MCF 10A (cell line): ENCODE measurements at regions of chr7 and their contacts with region 1.

Region 1: GRCh38 chr7:7221602-7222038 is 39.3 kb downstream of the C1GALT1 start:
- DNase-seq: peak; percentile 89
- H3K4me3 Mint-ChIP-seq: peak overlapping the region; percentile 31
- H3K27ac Mint-ChIP-seq: peak overlapping the region; percentile 92
- H3K4me1 Mint-ChIP-seq: peaks cover 24% of the 10 kb centered on the region
- H3K27me3 Mint-ChIP-seq: no peaks in the 10 kb centered on the region
- CTCF ChIP-seq: no peak

Region 2: DNA sequence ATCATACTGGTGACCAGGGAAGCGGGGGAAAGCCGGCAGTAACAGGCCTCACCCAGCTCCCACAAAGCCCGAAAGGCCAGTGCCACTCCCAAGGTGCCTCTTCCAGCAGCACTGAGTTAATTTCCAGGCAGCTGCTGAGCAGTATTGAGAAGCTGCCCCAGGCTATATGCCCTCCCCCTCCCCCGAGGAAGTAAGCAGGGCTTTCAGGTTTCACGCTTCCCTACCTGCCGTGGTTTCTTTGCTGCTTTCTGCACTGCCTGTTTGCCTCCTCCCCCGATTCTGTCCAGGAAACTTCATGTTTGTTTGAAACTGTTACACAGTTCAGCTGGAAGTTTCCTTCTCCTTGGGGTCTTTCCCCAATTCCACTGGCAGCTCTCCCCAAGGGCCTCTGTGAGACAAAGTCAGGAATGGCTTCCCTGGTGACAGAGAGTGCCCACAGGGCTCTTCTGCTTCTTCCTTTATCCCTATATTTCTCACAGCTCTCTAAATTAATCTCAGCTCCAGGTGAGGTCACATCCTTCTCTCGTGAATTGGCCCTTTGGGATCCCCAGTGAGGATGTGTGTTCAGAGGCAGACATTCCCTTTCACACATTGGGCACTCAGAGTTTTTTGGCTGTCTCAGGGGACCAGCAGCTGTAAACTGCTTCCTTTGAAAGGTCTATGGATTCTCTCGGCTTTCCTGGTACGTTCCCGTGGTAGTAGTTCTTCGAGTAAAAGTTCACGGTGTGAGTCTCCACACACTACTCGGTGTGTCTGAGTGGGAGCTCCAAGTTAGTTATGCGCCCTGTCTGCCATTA is 19.8 kb before region 1 on chr7:
- CTCF ChIA-PET with region 1: interaction called, 4 read pairs
- POLR2A ChIA-PET with region 1: interaction called, 16 read pairs
- intact Hi-C with region 1: no loop called
- DNase-seq: peak; percentile 69
- H3K4me3 Mint-ChIP-seq: peak overlapping the region; percentile 38
- H3K27ac Mint-ChIP-seq: peak overlapping the region; percentile 79
- H3K4me1 Mint-ChIP-seq: peaks cover 29% of the 10 kb centered on the region
- H3K27me3 Mint-ChIP-seq: no peaks in the 10 kb centered on the region
- CTCF ChIP-seq: no peak

Region 3: DNA sequence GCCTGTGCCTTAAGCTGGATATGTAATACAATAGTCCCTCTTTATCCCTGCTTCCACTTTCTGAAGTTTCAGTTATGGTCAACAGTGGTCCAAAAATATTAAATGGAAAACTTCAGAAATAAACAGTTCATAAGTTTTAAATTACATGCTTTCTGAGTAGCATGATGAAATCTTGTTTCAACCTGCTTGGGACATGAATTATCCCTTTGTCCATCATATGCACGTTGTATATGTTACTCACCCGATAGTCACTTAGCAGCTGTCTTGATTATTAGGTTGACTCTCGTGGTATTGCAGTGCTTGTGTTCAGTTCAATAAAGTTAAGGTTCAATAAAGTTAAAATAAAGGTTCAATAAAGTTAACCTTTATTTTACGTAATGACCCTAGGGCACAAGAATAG is 13.7 kb before region 1 on chr7:
- CTCF ChIA-PET with region 1: interaction called, 4 read pairs
- POLR2A ChIA-PET with region 1: interaction called, 16 read pairs
- intact Hi-C with region 1: no loop called
- DNase-seq: peak; percentile 53
- H3K4me3 Mint-ChIP-seq: peak overlapping the region; percentile 25
- H3K27ac Mint-ChIP-seq: peak overlapping the region; percentile 62
- H3K4me1 Mint-ChIP-seq: peaks cover 22% of the 10 kb centered on the region
- H3K27me3 Mint-ChIP-seq: no peaks in the 10 kb centered on the region
- CTCF ChIP-seq: no peak

Region 4: GRCh38 chr7:7408001-7408770 is 186.6 kb after region 1 on chr7:
- CTCF ChIA-PET with region 1: no interaction called
- POLR2A ChIA-PET with region 1: no interaction called
- intact Hi-C with region 1: no loop called
- DNase-seq: no peak
- H3K4me3 Mint-ChIP-seq: no peak overlapping the region
- H3K27ac Mint-ChIP-seq: no peak overlapping the region
- H3K4me1 Mint-ChIP-seq: no peaks in the 10 kb centered on the region
- H3K27me3 Mint-ChIP-seq: no peaks in the 10 kb centered on the region
- CTCF ChIP-seq: no peak